ENCODE measurements at regions of chr2 and their contacts with region 1.

Region 1: GRCh38 chr2:174039551-174040416 is 74.6 kb upstream of the SP3 start:
- DNase-seq: peak; percentile 75 to 94
- ATAC-seq: peak; percentile 90 to 95 (median 94)
- H3K4me3 ChIP-seq: no peak overlapping the region
- H3K4me3 Mint-ChIP-seq: peak overlapping the region; percentile 72
- H3K27ac ChIP-seq: peak overlapping the region; percentile 84
- H3K27ac Mint-ChIP-seq: peak overlapping the region; percentile 92 to 96
- H3K4me1 ChIP-seq: peaks cover 14% of the 10 kb centered on the region
- H3K4me1 Mint-ChIP-seq: peaks cover 9 to 10% of the 10 kb centered on the region in 2 donors
- H3K27me3 ChIP-seq: no peaks in the 10 kb centered on the region
- H3K27me3 Mint-ChIP-seq: peaks cover 8 to 12% of the 10 kb centered on the region in 2 donors
- CTCF ChIP-seq: peak; percentile 72

Region 2: DNA sequence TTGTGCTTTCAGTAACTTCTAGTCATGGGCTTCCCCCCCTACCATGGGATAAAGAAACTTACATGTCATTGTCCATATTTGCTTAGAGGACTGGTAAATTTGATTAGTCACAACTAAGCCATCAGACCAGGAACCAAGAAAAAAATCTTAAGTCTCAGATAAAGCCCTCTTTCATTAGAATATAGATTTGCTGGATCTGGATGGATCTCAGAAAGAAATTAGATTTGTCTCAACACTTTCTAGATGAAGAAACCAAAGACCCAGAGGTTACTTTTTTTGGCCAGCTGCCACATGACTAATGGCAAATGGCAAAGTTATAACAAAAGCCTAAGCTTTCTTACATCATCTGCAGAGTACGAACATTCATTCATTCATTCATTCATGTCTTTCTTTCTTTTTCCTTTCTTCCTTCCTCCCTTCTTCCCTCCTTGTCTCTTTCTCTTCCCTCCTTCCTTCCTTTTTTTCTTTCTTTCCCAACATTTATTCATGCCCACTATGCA is 624.9 kb before region 1 on chr2:
- intact Hi-C with region 1: no loop called
- DNase-seq: no peak
- ATAC-seq: no peak
- H3K4me3 ChIP-seq: no peak overlapping the region
- H3K4me3 Mint-ChIP-seq: no peak overlapping the region
- H3K27ac ChIP-seq: no peak overlapping the region
- H3K27ac Mint-ChIP-seq: no peak overlapping the region
- H3K4me1 ChIP-seq: no peaks in the 10 kb centered on the region
- H3K4me1 Mint-ChIP-seq: no peaks in the 10 kb centered on the region
- H3K27me3 ChIP-seq: no peaks in the 10 kb centered on the region
- H3K27me3 Mint-ChIP-seq: peaks cover 12 to 27% of the 10 kb centered on the region in 2 donors
- CTCF ChIP-seq: no peak

Region 3: GRCh38 chr2:173448938-173449471 is 590.8 kb before region 1 on chr2:
- intact Hi-C with region 1: no loop called
- DNase-seq: peak in 1 of 2 donors; percentile 76
- ATAC-seq: peak; percentile 26 to 71 (median 71)
- H3K4me3 ChIP-seq: no peak overlapping the region
- H3K4me3 Mint-ChIP-seq: peak overlapping the region; percentile 42
- H3K27ac ChIP-seq: no peak overlapping the region
- H3K27ac Mint-ChIP-seq: no peak overlapping the region
- H3K4me1 ChIP-seq: no peaks in the 10 kb centered on the region
- H3K4me1 Mint-ChIP-seq: peaks cover 0 to 12% of the 10 kb centered on the region in 2 donors
- H3K27me3 ChIP-seq: no peaks in the 10 kb centered on the region
- H3K27me3 Mint-ChIP-seq: peaks cover 9 to 37% of the 10 kb centered on the region in 2 donors
- CTCF ChIP-seq: no peak

Region 4: GRCh38 chr2:173884025-173884802 is 155.6 kb before region 1 on chr2:
- intact Hi-C with region 1: loop called (anchors 1 kb)
- DNase-seq: peak in 1 of 2 donors; percentile 57
- ATAC-seq: peak; percentile 54 to 74 (median 68)
- H3K4me3 ChIP-seq: no peak overlapping the region
- H3K4me3 Mint-ChIP-seq: no peak overlapping the region
- H3K27ac ChIP-seq: no peak overlapping the region
- H3K27ac Mint-ChIP-seq: no peak overlapping the region
- H3K4me1 ChIP-seq: no peaks in the 10 kb centered on the region
- H3K4me1 Mint-ChIP-seq: peaks cover 10 to 11% of the 10 kb centered on the region in 2 donors
- H3K27me3 ChIP-seq: peaks cover 1% of the 10 kb centered on the region
- H3K27me3 Mint-ChIP-seq: peaks cover 8 to 46% of the 10 kb centered on the region in 2 donors
- CTCF ChIP-seq: peak; percentile 42

Measured in natural killer cell (primary cell).